ENCODE measurements at regions of chr1 and their contacts with region 1.

Region 1: GRCh38 chr1:4978660-4979390 is 324.4 kb downstream of the AJAP1 start:
- DNase-seq: no peak
- ATAC-seq: no peak

Region 2: DNA sequence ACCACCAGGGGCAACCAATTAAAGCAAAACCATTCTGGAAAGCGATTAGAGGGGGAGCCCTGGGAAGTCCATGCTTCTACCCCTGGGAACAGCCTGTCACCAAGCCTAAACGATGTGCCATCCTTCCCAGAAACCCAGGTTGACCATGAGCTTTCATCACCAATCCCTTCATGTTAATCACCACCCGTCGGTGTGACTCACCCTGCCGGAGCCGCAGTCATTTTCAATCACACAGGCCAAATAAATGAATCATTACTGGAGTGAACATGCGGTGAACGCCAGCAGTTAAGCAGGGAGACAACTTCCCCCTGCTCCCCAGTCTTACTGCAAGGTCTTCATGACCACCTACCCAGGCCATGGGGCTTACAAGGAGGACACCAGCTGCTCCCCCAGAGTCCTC is 15.6 kb before region 1 on chr1:
- intact Hi-C with region 1: loop called (anchors 1 kb)
- DNase-seq: no peak
- ATAC-seq: no peak